Naive thymus-derived CD4-positive, alpha-beta T cell (primary cell): ENCODE measurements at regions of chr6 and their contacts with region 1.

Region 1: GRCh38 chr6:125301435-125302391 is at the start of gene HDDC2:
- DNase-seq: peak; percentile 23 to 66 (median 33)
- ATAC-seq: peak; percentile 66
- H3K4me3 ChIP-seq: peak within 1 kb of the TSS; percentile 61
- H3K4me3 Mint-ChIP-seq: peak within 1 kb of the TSS; percentile 83 to 95 (median 92)
- H3K27ac ChIP-seq: peak within 1 kb of the TSS; percentile 76
- H3K27ac Mint-ChIP-seq: peak within 1 kb of the TSS; percentile 64 to 95 (median 92)
- H3K4me1 ChIP-seq: peaks cover 25 to 34% of the 10 kb centered on the region in 2 donors
- H3K4me1 Mint-ChIP-seq: peaks cover 43 to 65% (median 63%) of the 10 kb centered on the region in 7 donors
- H3K27me3 ChIP-seq: no peaks in the 10 kb centered on the region
- H3K27me3 Mint-ChIP-seq: peaks cover 0 to 29% (median 0%) of the 10 kb centered on the region in 5 donors
- total RNA-seq, gene HDDC2: 33.4 to 58.5 (median 54.8) TPM

Region 2: GRCh38 chr6:125132058-125132457 is 169.7 kb before region 1 on chr6:
- CTCF ChIA-PET with region 1: no interaction called
- POLR2A ChIA-PET with region 1: no interaction called
- intact Hi-C with region 1: no loop called
- DNase-seq: no peak
- ATAC-seq: no peak
- H3K4me3 ChIP-seq: no peak overlapping the region
- H3K4me3 Mint-ChIP-seq: no peak overlapping the region
- H3K27ac ChIP-seq: no peak overlapping the region
- H3K27ac Mint-ChIP-seq: no peak overlapping the region
- H3K4me1 ChIP-seq: no peaks in the 10 kb centered on the region
- H3K4me1 Mint-ChIP-seq: no peaks in the 10 kb centered on the region
- H3K27me3 ChIP-seq: no peaks in the 10 kb centered on the region
- H3K27me3 Mint-ChIP-seq: peaks cover 0 to 16% (median 13%) of the 10 kb centered on the region in 5 donors

Region 3: DNA sequence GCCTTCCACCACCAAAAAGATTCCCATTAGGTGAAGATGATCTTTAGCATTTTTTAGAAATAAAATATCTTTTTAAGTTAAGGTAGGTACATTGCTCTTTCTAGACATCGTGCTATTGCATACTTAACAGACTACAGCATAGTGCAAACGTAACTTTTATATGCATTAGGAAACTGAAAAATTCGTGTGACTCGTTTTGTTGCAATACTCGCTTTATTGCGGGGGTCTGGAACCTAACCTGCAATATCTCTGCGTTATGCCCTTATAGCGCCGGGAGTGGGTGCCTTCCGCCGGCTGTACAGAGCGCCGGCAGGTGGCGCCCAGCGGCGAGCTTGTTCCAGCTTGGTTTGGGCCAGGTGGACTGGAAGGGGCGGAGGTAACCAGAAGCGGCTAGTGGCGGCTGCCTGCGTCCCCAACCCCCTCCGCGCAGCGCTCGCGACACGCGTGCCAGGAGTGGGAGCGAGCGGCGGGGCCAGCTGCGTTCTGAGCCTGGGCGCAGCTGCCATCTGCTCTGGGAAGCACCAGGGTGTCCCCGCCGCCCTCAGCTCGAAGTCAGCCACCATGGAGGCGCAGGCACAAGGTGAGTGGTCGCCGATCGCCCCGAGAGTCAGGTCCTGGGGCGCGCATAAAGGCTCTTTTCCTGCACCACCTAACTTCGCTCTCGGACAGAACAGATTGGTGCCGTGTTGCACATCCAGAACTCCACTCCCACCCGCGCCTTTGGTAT is 148.2 kb before region 1 on chr6 and contains the start of gene TPD52L1:
- CTCF ChIA-PET with region 1: interaction called, 3 read pairs
- POLR2A ChIA-PET with region 1: no interaction called
- intact Hi-C with region 1: loop called (anchors 2 to 5 kb)
- DNase-seq: peak; percentile 23 to 68 (median 35)
- ATAC-seq: peak; percentile 87
- H3K4me3 ChIP-seq: peak within 1 kb of the TSS; percentile 55
- H3K4me3 Mint-ChIP-seq: peak within 1 kb of the TSS; percentile 72 to 87 (median 78)
- H3K27ac ChIP-seq: no peak within 1 kb of the TSS
- H3K27ac Mint-ChIP-seq: no peak within 1 kb of the TSS
- H3K4me1 ChIP-seq: peaks cover 0 to 5% of the 10 kb centered on the region in 2 donors
- H3K4me1 Mint-ChIP-seq: peaks cover 0 to 14% (median 10%) of the 10 kb centered on the region in 7 donors
- H3K27me3 ChIP-seq: peaks cover 0 to 4% of the 10 kb centered on the region in 2 donors
- H3K27me3 Mint-ChIP-seq: peaks cover 24 to 54% (median 45%) of the 10 kb centered on the region in 5 donors
- total RNA-seq, gene TPD52L1: 0.15 TPM in 1 of 5 experiments, not detected in the others

Region 4: DNA sequence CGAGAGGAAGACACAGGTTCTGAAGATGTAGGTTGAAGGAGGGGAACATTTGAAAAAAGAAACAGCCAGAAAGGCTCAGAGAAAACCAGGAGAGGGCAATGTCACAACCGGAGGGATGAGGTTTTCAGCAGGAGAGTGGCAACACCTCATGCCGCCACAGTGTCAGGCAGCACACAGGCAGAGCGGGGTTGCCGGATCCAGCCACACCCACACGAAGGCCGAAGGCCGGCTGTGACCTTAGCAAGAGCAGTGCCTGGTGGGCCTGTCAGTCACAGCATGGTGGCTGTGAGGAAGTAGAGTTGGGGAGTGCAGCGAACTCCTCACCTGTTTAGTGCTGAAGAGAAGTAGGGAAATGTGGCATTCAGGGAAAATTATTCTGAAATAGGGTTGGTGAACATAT is 14.0 kb before region 1 on chr6:
- CTCF ChIA-PET with region 1: no interaction called
- POLR2A ChIA-PET with region 1: no interaction called
- intact Hi-C with region 1: no loop called
- DNase-seq: no peak
- ATAC-seq: no peak
- H3K4me3 ChIP-seq: no peak overlapping the region
- H3K4me3 Mint-ChIP-seq: no peak overlapping the region
- H3K27ac ChIP-seq: no peak overlapping the region
- H3K27ac Mint-ChIP-seq: peak overlapping the region in 2 of 9 donors; percentile 5 to 19
- H3K4me1 ChIP-seq: no peaks in the 10 kb centered on the region
- H3K4me1 Mint-ChIP-seq: peaks cover 5 to 52% (median 37%) of the 10 kb centered on the region in 7 donors
- H3K27me3 ChIP-seq: no peaks in the 10 kb centered on the region
- H3K27me3 Mint-ChIP-seq: no peaks in the 10 kb centered on the region

Region 5: DNA sequence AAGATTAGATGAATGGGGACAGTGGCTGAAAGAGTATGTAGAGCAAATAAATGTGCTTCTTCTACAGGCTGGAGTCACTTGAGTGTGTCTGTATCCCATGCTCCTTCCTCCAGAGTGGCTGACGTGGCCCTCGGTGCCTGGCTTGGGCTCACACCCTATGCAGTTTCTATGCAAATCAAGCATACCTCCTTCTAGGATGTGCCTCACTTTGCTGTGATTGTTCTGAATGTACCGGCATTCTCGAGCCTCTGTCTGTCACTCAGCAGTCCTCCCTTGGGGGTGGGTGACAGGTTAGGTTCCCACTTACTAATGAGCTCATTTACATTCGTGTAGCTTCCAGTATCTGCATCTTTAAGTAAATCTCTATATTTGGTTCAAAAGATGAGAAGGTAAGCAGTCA is 55.2 kb after region 1 on chr6:
- CTCF ChIA-PET with region 1: no interaction called
- POLR2A ChIA-PET with region 1: no interaction called
- intact Hi-C with region 1: no loop called
- DNase-seq: no peak
- ATAC-seq: no peak
- H3K4me3 ChIP-seq: no peak overlapping the region
- H3K4me3 Mint-ChIP-seq: no peak overlapping the region
- H3K27ac ChIP-seq: no peak overlapping the region
- H3K27ac Mint-ChIP-seq: no peak overlapping the region
- H3K4me1 ChIP-seq: no peaks in the 10 kb centered on the region
- H3K4me1 Mint-ChIP-seq: peaks cover 0 to 9% (median 4%) of the 10 kb centered on the region in 7 donors
- H3K27me3 ChIP-seq: no peaks in the 10 kb centered on the region
- H3K27me3 Mint-ChIP-seq: peaks cover 10 to 29% (median 14%) of the 10 kb centered on the region in 5 donors

Region 6: GRCh38 chr6:125779924-125780539 is 478.3 kb after region 1 on chr6:
- CTCF ChIA-PET with region 1: interaction called, 3 read pairs
- POLR2A ChIA-PET with region 1: interaction called, 21 read pairs
- intact Hi-C with region 1: loop called in 1 of 2 experiments (anchors 5 kb)
- DNase-seq: peak; percentile 83 to 96 (median 94)
- ATAC-seq: peak; percentile 89
- H3K4me3 ChIP-seq: peak overlapping the region; percentile 84
- H3K4me3 Mint-ChIP-seq: no peak overlapping the region
- H3K27ac ChIP-seq: peak overlapping the region; percentile 77
- H3K27ac Mint-ChIP-seq: no peak overlapping the region
- H3K4me1 ChIP-seq: peaks cover 4 to 19% of the 10 kb centered on the region in 2 donors
- H3K4me1 Mint-ChIP-seq: peaks cover 5 to 27% (median 22%) of the 10 kb centered on the region in 7 donors
- H3K27me3 ChIP-seq: no peaks in the 10 kb centered on the region
- H3K27me3 Mint-ChIP-seq: peaks cover 0 to 28% (median 0%) of the 10 kb centered on the region in 5 donors

Region 7: DNA sequence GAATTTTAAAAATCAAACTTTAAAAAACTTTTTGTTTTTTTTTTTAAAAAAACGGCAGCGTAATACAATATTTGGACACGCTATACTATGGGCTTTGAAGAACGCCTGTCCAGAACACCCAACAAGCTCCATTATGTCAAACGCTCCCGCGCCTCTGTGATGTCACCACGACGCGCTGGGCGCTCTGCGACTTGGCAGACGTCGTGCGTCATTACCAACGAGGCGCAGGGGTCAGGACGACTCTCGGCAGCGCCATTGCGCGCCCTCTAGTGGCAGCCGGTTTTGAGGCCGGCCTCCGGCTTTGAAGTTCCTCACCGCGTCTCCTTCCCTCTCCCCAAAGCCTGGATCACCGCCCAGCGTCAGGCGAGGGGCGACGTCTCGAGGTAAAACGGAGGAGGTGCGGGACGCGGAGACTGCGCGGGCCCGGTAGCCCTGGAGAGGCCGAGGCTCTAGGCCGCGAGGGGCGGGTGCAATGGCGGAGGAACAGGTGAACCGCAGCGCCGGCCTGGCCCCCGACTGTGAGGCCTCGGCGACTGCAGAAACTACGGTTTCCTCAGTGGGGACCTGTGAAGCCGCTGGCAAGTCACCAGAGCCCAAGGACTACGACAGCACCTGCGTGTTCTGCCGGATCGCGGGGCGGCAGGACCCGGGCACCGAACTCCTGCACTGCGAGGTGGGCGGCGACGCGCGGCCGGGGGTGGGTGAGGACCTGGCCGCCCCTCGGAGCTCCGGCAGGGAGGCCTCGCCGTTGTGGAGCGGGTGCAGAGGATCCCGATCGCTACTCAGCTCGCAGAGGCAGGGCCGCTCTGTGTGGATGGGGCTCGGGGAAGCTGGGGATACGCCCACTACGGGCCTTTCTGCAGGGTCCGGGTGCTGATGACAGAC is 655.0 kb after region 1 on chr6 and contains the start of gene HINT3:
- CTCF ChIA-PET with region 1: no interaction called
- POLR2A ChIA-PET with region 1: interaction called, 4 read pairs
- intact Hi-C with region 1: loop called (anchors 2 to 5 kb)
- DNase-seq: peak; percentile 94 to 98 (median 97)
- ATAC-seq: peak; percentile 96
- H3K4me3 ChIP-seq: peak within 1 kb of the TSS; percentile 78
- H3K4me3 Mint-ChIP-seq: peak within 1 kb of the TSS in 1 of 10 donors; percentile 69
- H3K27ac ChIP-seq: peak within 1 kb of the TSS; percentile 98
- H3K27ac Mint-ChIP-seq: peak within 1 kb of the TSS in 3 of 9 donors; percentile 62 to 76 (median 73)
- H3K4me1 ChIP-seq: peaks cover 16 to 18% of the 10 kb centered on the region in 2 donors
- H3K4me1 Mint-ChIP-seq: peaks cover 0 to 22% (median 7%) of the 10 kb centered on the region in 7 donors
- H3K27me3 ChIP-seq: no peaks in the 10 kb centered on the region
- H3K27me3 Mint-ChIP-seq: peaks cover 0 to 7% (median 5%) of the 10 kb centered on the region in 5 donors
- total RNA-seq, gene HINT3: 7.7 to 12.4 (median 9.5) TPM

Region 8: GRCh38 chr6:126339796-126340609 is 1038.3 kb after region 1 on chr6 and contains the start of gene CENPW:
- CTCF ChIA-PET with region 1: no interaction called
- POLR2A ChIA-PET with region 1: no interaction called
- intact Hi-C with region 1: loop called (anchors 10 kb)
- DNase-seq: peak; percentile 84 to 96 (median 87)
- ATAC-seq: peak; percentile 98
- H3K4me3 ChIP-seq: peak within 1 kb of the TSS; percentile 80
- H3K4me3 Mint-ChIP-seq: no peak within 1 kb of the TSS
- H3K27ac ChIP-seq: peak within 1 kb of the TSS; percentile 33
- H3K27ac Mint-ChIP-seq: no peak within 1 kb of the TSS
- H3K4me1 ChIP-seq: peaks cover 6 to 12% of the 10 kb centered on the region in 2 donors
- H3K4me1 Mint-ChIP-seq: peaks cover 5 to 21% (median 12%) of the 10 kb centered on the region in 7 donors
- H3K27me3 ChIP-seq: no peaks in the 10 kb centered on the region
- H3K27me3 Mint-ChIP-seq: no peaks in the 10 kb centered on the region
- total RNA-seq, gene CENPW: 1.2 to 37.1 (median 3.9) TPM